Activated CD4-positive, alpha-beta T cell treated with anti-CD3 and anti-CD28 coated beads, Interleukin-2, amount 10 ng/mL, durations not matched to agents 24 days and 14 days (primary cell): ENCODE measurements at regions of chr12 and their contacts with region 1.

Region 1: GRCh38 chr12:94262228-94263010 is 114.0 kb downstream of the PLXNC1 start:
- DNase-seq: peak; percentile 90
- H3K4me3 Mint-ChIP-seq: peak overlapping the region; percentile 84
- H3K27ac Mint-ChIP-seq: peak overlapping the region; percentile 98
- H3K4me1 Mint-ChIP-seq: peaks cover 35% of the 10 kb centered on the region
- H3K27me3 Mint-ChIP-seq: no peaks in the 10 kb centered on the region

Region 2: GRCh38 chr12:94149119-94149780 is 113.2 kb before region 1 on chr12:
- intact Hi-C with region 1: loop called (anchors 1 kb)
- DNase-seq: peak; percentile 86
- H3K4me3 Mint-ChIP-seq: peak overlapping the region; percentile 97
- H3K27ac Mint-ChIP-seq: peak overlapping the region; percentile 62
- H3K4me1 Mint-ChIP-seq: peaks cover 34% of the 10 kb centered on the region
- H3K27me3 Mint-ChIP-seq: peaks cover 21% of the 10 kb centered on the region

Region 3: GRCh38 chr12:94207849-94208621 is 54.4 kb before region 1 on chr12:
- intact Hi-C with region 1: loop called (anchors 1 kb)
- DNase-seq: peak; percentile 84
- H3K4me3 Mint-ChIP-seq: peak overlapping the region; percentile 84
- H3K27ac Mint-ChIP-seq: peak overlapping the region; percentile 95
- H3K4me1 Mint-ChIP-seq: peaks cover 59% of the 10 kb centered on the region
- H3K27me3 Mint-ChIP-seq: no peaks in the 10 kb centered on the region

Region 4: GRCh38 chr12:94305130-94305957 is 42.9 kb after region 1 on chr12:
- intact Hi-C with region 1: loop called (anchors 1 kb)
- DNase-seq: peak; percentile 92
- H3K4me3 Mint-ChIP-seq: peak overlapping the region; percentile 60
- H3K27ac Mint-ChIP-seq: peak overlapping the region; percentile 82
- H3K4me1 Mint-ChIP-seq: peaks cover 47% of the 10 kb centered on the region
- H3K27me3 Mint-ChIP-seq: no peaks in the 10 kb centered on the region

Region 5: DNA sequence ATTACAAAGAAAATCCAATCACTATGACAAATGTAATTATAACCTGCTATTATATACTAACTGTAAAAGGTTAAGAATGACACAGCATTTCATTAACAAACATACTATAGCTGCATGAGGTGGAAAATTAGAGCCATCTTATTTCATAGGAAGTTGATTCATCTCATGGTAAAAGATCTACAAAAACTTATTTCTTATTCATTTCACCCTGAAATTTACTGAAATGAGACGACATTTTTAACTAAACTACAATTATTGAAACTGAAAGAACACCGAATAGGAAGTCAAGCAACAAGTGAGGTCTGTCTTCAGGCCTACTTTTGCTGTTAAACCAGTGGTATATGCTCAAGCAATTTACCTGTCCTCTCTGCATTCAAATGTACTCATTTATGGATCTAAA is 110.0 kb after region 1 on chr12:
- intact Hi-C with region 1: loop called (anchors 2 kb)
- DNase-seq: no peak
- H3K4me3 Mint-ChIP-seq: peak overlapping the region; percentile 35
- H3K27ac Mint-ChIP-seq: peak overlapping the region; percentile 85
- H3K4me1 Mint-ChIP-seq: peaks cover 23% of the 10 kb centered on the region
- H3K27me3 Mint-ChIP-seq: no peaks in the 10 kb centered on the region

Region 6: DNA sequence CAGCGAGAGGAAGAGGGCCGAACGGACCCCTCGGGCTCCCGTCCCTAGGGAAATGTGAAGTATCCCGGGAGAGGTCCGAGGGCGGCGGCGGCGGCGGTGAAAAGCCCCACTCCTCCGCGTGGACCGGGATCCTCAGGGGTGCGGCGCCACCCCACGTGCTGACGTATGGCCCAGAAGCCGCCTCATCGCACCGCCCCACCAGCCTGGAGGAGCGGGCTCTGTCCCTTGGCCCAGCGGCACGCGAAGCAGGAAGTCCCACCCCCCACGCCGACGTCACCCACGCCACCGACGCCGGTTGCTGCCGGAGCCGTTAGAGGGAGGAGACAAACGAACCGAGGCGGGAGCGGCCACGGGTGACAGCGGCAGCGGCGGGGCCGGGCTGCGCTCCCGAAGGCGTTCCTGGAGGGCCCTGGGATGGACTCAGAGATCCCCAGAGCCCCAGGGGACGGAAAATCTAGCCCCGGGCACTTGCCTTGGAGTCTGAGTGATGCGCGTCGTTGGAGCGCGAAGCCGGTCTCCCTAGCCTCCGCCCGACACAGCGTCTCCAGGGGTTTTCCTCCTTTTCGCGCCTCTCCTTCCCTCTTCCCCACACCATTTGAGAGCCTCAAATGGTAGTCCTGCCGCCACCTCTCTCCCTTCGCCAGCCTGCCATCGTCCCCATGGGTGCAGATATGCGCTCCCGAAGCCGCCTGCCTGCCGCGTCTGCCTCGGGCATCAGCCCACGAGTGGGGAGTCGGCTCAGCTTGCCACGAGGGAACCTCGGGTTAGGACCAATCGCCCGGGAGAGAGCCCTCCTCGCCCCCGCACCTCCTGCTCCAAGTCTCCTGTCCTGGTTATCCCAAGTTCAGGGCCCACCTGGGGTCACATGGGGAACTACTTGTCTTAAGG is 197.6 kb after region 1 on chr12 and contains the start of gene CEP83:
- intact Hi-C with region 1: loop called (anchors 2 kb)
- DNase-seq: peak; percentile 100
- H3K4me3 Mint-ChIP-seq: peak within 1 kb of the TSS; percentile 98
- H3K27ac Mint-ChIP-seq: peak within 1 kb of the TSS; percentile 98
- H3K4me1 Mint-ChIP-seq: peaks cover 29% of the 10 kb centered on the region
- H3K27me3 Mint-ChIP-seq: peaks cover 4% of the 10 kb centered on the region
- total RNA-seq, gene CEP83: 36.9 and 38.7 TPM in 2 replicates

Region 7: GRCh38 chr12:94481734-94482133 is 219.3 kb after region 1 on chr12:
- intact Hi-C with region 1: no loop called
- DNase-seq: no peak
- H3K4me3 Mint-ChIP-seq: no peak overlapping the region
- H3K27ac Mint-ChIP-seq: no peak overlapping the region
- H3K4me1 Mint-ChIP-seq: no peaks in the 10 kb centered on the region
- H3K27me3 Mint-ChIP-seq: peaks cover 5% of the 10 kb centered on the region

Region 8: DNA sequence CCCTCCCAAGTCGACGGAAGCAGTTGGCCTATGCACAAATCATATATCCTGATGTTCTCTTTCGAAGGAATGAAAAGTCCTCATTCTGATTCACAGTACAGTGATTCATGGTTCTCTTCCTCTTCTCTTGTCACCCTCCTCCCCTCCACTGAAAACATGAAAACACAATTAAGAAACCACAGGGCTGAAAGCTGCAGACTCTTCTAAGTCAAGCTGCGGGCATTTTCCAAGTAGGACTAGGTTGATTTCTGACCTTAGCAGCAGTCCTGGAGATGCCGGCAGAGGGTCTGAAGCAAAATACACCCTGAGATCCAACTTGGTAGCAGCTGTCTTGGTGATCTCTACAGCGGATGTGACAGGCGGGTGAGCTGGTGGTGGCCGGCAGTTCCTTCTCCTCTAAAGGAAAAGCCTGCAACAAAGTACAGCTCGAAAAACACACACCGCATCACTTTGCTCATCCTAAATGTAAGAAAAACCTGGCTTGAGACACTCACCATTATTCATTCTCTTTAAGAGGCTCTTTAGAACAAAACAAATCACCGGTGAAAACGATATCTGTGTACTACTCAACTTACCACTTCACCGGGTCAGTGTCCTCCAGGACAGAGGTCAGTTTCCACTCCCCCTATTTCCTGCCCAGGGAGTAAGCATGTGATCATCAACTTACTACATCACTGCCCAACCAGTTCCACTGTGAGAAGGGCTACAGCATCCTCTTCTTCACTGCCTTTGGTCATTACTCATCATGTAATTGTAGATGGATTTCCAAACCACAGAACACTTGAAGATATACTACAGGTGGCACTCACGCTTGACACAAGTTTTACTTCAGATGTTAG is 381.9 kb after region 1 on chr12:
- intact Hi-C with region 1: loop called (anchors 5 kb)
- DNase-seq: peak; percentile 70
- H3K4me3 Mint-ChIP-seq: peak overlapping the region; percentile 47
- H3K27ac Mint-ChIP-seq: peak overlapping the region; percentile 41
- H3K4me1 Mint-ChIP-seq: peaks cover 40% of the 10 kb centered on the region
- H3K27me3 Mint-ChIP-seq: peaks cover 64% of the 10 kb centered on the region